ENCODE measurements at regions of chr22 and their contacts with region 1.

Region 1: GRCh38 chr22:20624161-20624616 is 116.8 kb downstream of the MED15 start:
- DNase-seq: peak; percentile 84
- H3K4me3 Mint-ChIP-seq: no peak overlapping the region
- H3K27ac Mint-ChIP-seq: peak overlapping the region; percentile 32
- H3K4me1 Mint-ChIP-seq: peaks cover 20% of the 10 kb centered on the region
- H3K27me3 Mint-ChIP-seq: peaks cover 2% of the 10 kb centered on the region

Region 2: DNA sequence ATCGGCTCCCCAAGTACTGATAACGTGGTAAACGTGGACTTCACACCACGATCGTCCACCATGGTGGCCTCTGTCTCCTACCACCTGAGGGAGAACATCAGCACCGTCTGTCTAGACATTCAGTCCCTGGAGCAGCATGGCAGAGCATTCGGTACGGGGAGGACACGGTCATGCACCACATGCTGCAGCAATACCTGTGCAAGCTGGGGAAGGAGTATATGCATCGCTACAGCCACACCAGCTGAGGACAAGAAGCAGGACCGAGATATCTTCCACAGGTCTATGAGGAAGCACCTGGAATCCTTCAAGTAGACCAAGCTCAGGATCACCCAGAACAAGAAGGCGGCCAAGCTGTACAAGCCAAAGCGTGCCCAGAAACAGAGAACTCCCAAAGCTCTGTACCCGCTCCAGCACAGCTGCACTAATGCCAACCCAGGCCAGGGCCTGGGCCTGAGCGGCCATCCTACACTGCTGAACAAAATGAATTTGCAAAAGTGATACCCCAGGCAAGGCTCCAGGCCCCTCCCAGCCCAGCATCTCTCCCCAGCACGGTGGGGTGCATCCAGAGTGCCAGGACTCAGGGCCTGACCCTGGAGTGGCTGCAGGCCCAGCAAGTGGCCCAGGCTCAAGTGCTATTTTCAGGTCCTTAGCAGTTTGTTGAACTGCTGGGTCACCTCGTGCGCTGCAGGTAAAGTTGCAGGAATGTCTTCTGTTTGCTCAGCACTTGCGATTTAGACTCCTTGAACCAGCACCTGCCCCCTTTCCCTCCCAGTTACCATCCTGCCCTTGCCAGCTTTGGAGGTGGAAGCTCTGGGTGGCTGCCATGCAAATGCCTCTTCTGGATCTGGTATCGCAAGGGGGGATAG is 30.4 kb after region 1 on chr22:
- CTCF ChIA-PET with region 1: no interaction called
- POLR2A ChIA-PET with region 1: no interaction called
- intact Hi-C with region 1: no loop called
- DNase-seq: no peak
- H3K4me3 Mint-ChIP-seq: no peak overlapping the region
- H3K27ac Mint-ChIP-seq: no peak overlapping the region
- H3K4me1 Mint-ChIP-seq: no peaks in the 10 kb centered on the region
- H3K27me3 Mint-ChIP-seq: peaks cover 7% of the 10 kb centered on the region

Region 3: GRCh38 chr22:20671409-20672081 is 47.4 kb after region 1 on chr22:
- CTCF ChIA-PET with region 1: no interaction called
- POLR2A ChIA-PET with region 1: no interaction called
- intact Hi-C with region 1: loop called (anchors 10 kb)
- DNase-seq: no peak
- H3K4me3 Mint-ChIP-seq: no peak overlapping the region
- H3K27ac Mint-ChIP-seq: no peak overlapping the region
- H3K4me1 Mint-ChIP-seq: peaks cover 2% of the 10 kb centered on the region
- H3K27me3 Mint-ChIP-seq: peaks cover 23% of the 10 kb centered on the region

Measured in activated CD4-positive, alpha-beta memory T cell treated with anti-CD3 and anti-CD28 coated beads for 36 hours (primary cell).